ENCODE measurements at regions of chr3 and their contacts with region 1.

Region 1: GRCh38 chr3:112629425-112629824 is 11.5 kb downstream of the CCDC80 start:
- DNase-seq: peak; percentile 80
- ATAC-seq: peak; percentile 98
- H3K4me3 ChIP-seq: no peak overlapping the region
- H3K27ac ChIP-seq: no peak overlapping the region
- H3K4me1 ChIP-seq: peaks cover 26% of the 10 kb centered on the region
- H3K27me3 ChIP-seq: no peaks in the 10 kb centered on the region
- CTCF ChIP-seq: no peak

Region 2: DNA sequence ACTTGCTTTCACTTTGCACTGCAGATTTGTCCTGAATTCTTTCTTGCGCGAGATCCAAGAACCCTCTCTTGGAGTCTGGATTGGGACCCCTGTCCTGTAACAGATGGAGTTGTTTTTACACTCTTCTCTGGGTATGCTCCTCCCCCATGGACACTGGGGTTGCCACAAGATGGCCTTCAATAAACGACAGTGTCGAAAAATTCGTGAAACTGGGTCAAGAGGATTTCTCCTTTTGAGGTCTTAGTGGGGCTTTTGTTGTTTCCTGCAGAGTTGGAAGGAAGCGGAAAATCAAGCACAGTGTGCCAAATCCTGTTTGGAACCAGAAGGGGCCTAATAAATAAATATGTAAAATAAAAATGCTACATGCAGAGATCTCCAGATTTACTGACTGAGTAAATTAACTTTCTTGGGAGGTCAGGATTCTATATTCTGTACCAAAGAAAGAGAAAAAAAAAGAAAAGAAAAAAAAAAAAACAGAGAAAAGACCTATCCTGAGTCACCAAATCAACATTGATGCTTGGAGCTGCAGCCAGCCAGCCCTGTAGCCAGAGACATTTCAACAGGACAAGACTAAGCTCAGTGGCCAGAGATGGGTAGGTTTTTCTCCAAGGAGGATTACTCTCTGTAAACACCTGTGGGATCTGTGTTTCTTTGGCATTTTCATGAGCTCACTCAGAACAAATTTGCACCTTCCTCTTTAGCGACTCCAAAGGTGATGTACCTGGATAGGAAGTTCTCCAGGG is 13.3 kb before region 1 on chr3:
- CTCF ChIA-PET with region 1: no interaction called
- POLR2A ChIA-PET with region 1: no interaction called
- intact Hi-C with region 1: loop called (anchors 2 kb)
- DNase-seq: no peak
- ATAC-seq: peak; percentile 80
- H3K4me3 ChIP-seq: no peak overlapping the region
- H3K27ac ChIP-seq: no peak overlapping the region
- H3K4me1 ChIP-seq: peaks cover 11% of the 10 kb centered on the region
- H3K27me3 ChIP-seq: no peaks in the 10 kb centered on the region
- CTCF ChIP-seq: no peak

Region 3: DNA sequence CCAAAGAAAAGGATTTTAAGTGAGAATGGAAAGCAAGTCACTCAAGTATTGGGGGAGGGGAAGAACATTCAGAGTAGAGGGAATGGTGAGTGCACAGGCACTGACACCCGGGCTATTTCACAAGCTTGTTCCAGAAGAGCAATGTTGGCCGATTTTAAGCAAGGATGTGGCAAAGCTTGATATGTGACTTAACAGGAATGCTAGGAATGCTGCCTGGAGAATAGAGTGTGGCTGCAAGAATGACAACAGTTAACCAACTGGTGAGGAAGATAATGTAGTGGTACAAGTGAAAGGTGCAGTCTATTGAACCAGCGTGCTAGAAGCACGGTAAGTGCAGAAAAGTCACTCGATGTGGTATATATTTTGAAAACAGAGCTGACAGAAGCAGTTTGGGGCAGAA is 17.7 kb after region 1 on chr3:
- CTCF ChIA-PET with region 1: no interaction called
- POLR2A ChIA-PET with region 1: no interaction called
- intact Hi-C with region 1: no loop called
- DNase-seq: peak; percentile 91
- ATAC-seq: peak; percentile 37
- H3K4me3 ChIP-seq: peak overlapping the region; percentile 42
- H3K27ac ChIP-seq: peak overlapping the region; percentile 60
- H3K4me1 ChIP-seq: peaks cover 69% of the 10 kb centered on the region
- H3K27me3 ChIP-seq: no peaks in the 10 kb centered on the region
- CTCF ChIP-seq: no peak

Measured in PC-3 (cell line).